ENCODE measurements at regions of chr1 and their contacts with region 1.

Region 1: GRCh38 chr1:207885129-207886032 is 25.5 kb downstream of the CD34 start:
- DNase-seq: peak; percentile 94
- H3K4me3 ChIP-seq: no peak overlapping the region
- H3K27ac ChIP-seq: peak overlapping the region; percentile 53
- H3K4me1 ChIP-seq: peaks cover 44% of the 10 kb centered on the region
- H3K27me3 ChIP-seq: no peaks in the 10 kb centered on the region
- CTCF ChIP-seq: peak; percentile 93
- POLR2A ChIP-seq: no peak

Region 2: DNA sequence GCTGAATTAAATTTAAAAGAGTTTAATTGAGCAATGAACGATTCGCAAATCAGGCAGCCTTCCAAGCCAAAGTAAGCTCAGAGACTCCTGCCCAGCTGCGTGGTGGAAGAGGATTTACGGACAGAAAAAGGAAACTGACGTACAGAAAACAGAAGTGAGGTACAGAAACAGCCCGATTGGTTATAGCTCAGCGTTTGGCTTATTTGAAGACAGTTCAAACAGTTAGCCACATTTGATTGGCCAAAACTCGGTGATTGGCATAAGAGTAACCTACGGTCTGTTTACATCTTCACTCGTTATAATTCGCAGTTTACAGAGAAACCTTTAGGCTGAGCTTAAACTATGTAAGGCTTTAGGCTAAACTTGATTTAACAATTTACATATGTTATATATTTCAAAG is 193.5 kb before region 1 on chr1:
- CTCF ChIA-PET with region 1: no interaction called
- POLR2A ChIA-PET with region 1: no interaction called
- dilution Hi-C with region 1: no loop called
- intact Hi-C with region 1: no loop called
- DNase-seq: no peak
- H3K4me3 ChIP-seq: no peak overlapping the region
- H3K27ac ChIP-seq: no peak overlapping the region
- H3K4me1 ChIP-seq: no peaks in the 10 kb centered on the region
- H3K27me3 ChIP-seq: peaks cover 5 to 17% of the 10 kb centered on the region in 2 experiments
- CTCF ChIP-seq: no peak
- POLR2A ChIP-seq: no peak

Region 3: GRCh38 chr1:207828485-207829158 is 56.8 kb before region 1 on chr1:
- CTCF ChIA-PET with region 1: interaction called, 94 read pairs
- POLR2A ChIA-PET with region 1: interaction called, 4 read pairs
- dilution Hi-C with region 1: no loop called
- intact Hi-C with region 1: loop called (anchors 1 kb)
- DNase-seq: peak; percentile 96
- H3K4me3 ChIP-seq: no peak overlapping the region
- H3K27ac ChIP-seq: peak overlapping the region; percentile 14
- H3K4me1 ChIP-seq: peaks cover 45% of the 10 kb centered on the region
- H3K27me3 ChIP-seq: no peaks in the 10 kb centered on the region
- CTCF ChIP-seq: peak; percentile 82 to 94
- POLR2A ChIP-seq: peak; percentile 23

Region 4: GRCh38 chr1:207897188-207897587 is 11.8 kb after region 1 on chr1:
- CTCF ChIA-PET with region 1: interaction called, 130 read pairs
- POLR2A ChIA-PET with region 1: interaction called, 4 read pairs
- dilution Hi-C with region 1: no loop called
- intact Hi-C with region 1: loop called (anchors 1 kb)
- DNase-seq: peak; percentile 57
- H3K4me3 ChIP-seq: no peak overlapping the region
- H3K27ac ChIP-seq: no peak overlapping the region
- H3K4me1 ChIP-seq: peaks cover 6% of the 10 kb centered on the region
- H3K27me3 ChIP-seq: no peaks in the 10 kb centered on the region
- CTCF ChIP-seq: peak; percentile 8 to 11
- POLR2A ChIP-seq: no peak

Region 5: DNA sequence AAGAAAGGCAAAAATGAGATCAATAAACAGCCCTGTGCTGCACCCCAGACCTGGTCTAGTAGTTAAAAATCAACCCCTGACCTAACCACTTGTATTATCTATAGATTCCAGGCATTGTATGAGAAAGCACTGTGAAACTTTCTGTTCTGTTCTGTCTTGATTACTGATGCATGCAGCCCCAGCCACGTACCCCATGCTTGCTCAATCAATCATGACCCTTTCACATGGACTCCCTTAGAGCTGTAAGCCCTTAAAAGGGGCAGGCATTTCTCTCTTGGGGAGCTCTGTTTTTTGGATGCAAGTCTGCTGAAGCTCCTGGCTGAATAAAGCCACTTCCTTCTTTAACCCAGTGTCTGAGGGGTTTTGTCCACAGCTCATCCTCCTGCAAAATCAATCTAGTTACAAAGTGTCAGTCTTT is 49.8 kb after region 1 on chr1:
- CTCF ChIA-PET with region 1: interaction called, 14 read pairs
- POLR2A ChIA-PET with region 1: no interaction called
- dilution Hi-C with region 1: no loop called
- intact Hi-C with region 1: loop called (anchors 1 kb)
- DNase-seq: no peak
- H3K4me3 ChIP-seq: no peak overlapping the region
- H3K27ac ChIP-seq: no peak overlapping the region
- H3K4me1 ChIP-seq: peaks cover 26% of the 10 kb centered on the region
- H3K27me3 ChIP-seq: no peaks in the 10 kb centered on the region
- CTCF ChIP-seq: no peak
- POLR2A ChIP-seq: no peak

Region 6: GRCh38 chr1:207963427-207964194 is 78.2 kb after region 1 on chr1:
- CTCF ChIA-PET with region 1: interaction called, 321 read pairs
- POLR2A ChIA-PET with region 1: interaction called, 20 read pairs
- dilution Hi-C with region 1: no loop called
- intact Hi-C with region 1: loop called (anchors 1 kb)
- DNase-seq: peak; percentile 94
- H3K4me3 ChIP-seq: peak overlapping the region in 2 of 3 experiments; percentile 1 to 17
- H3K27ac ChIP-seq: peak overlapping the region; percentile 81
- H3K4me1 ChIP-seq: peaks cover 29% of the 10 kb centered on the region
- H3K27me3 ChIP-seq: no peaks in the 10 kb centered on the region
- CTCF ChIP-seq: peak; percentile 92 to 99
- POLR2A ChIP-seq: peak; percentile 59

Region 7: DNA sequence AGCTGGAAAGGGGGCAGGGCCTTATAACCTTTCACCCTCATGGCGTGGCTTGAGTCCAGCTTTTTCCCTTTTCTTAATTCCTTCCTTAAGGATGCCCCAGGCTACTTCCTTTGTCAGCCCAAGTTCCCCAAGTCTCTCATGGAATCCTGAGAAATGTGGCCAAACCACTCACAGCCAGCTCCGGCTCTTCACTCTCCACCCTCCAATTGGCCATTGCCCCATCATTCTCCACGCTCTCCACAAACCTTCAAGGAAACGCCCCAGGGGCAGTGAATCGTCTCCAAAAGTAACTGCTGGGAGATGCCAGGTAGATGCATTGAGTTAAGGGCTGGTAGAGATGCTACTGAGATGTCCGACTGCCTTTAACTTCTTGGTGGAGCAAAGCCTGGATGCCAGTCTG is 139.0 kb after region 1 on chr1:
- CTCF ChIA-PET with region 1: interaction called, 34 read pairs
- POLR2A ChIA-PET with region 1: no interaction called
- dilution Hi-C with region 1: no loop called
- intact Hi-C with region 1: no loop called
- DNase-seq: no peak
- H3K4me3 ChIP-seq: no peak overlapping the region
- H3K27ac ChIP-seq: no peak overlapping the region
- H3K4me1 ChIP-seq: peaks cover 5% of the 10 kb centered on the region
- H3K27me3 ChIP-seq: no peaks in the 10 kb centered on the region
- CTCF ChIP-seq: no peak
- POLR2A ChIP-seq: peak; percentile 15

Region 8: GRCh38 chr1:208207388-208208131 is 322.2 kb after region 1 on chr1:
- CTCF ChIA-PET with region 1: no interaction called
- POLR2A ChIA-PET with region 1: no interaction called
- dilution Hi-C with region 1: no loop called
- intact Hi-C with region 1: loop called (anchors 1 kb)
- DNase-seq: peak; percentile 97
- H3K4me3 ChIP-seq: no peak overlapping the region
- H3K27ac ChIP-seq: peak overlapping the region; percentile 94
- H3K4me1 ChIP-seq: peaks cover 94% of the 10 kb centered on the region
- H3K27me3 ChIP-seq: no peaks in the 10 kb centered on the region
- CTCF ChIP-seq: no peak
- POLR2A ChIP-seq: no peak